ENCODE measurements at regions of chr5 and their contacts with region 1.

Region 1: GRCh38 chr5:33299621-33300208 is 141.1 kb upstream of the TARS1 start:
- DNase-seq: peak; percentile 21
- H3K4me3 Mint-ChIP-seq: no peak overlapping the region
- H3K27ac Mint-ChIP-seq: no peak overlapping the region
- H3K4me1 Mint-ChIP-seq: no peaks in the 10 kb centered on the region
- H3K27me3 Mint-ChIP-seq: no peaks in the 10 kb centered on the region
- CTCF ChIP-seq: no peak

Region 2: DNA sequence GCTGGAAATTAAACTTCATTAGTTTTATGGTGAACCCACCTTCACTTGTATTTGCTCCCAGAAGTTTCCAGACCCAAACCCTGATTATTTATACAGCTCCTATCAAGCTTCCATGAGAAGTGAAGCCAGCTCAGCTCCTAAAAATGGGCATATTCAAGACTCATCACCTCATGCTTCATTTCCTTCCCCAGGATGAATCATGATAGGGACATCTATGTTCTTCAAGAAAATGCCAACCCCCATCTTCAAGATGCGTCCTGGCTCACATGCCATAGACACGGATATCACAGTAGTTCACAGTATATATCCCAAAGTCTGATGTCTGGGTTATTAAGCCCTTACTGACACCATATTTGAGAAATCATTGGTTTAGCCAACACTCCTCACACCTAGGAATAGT is 371.0 kb before region 1 on chr5:
- CTCF ChIA-PET with region 1: no interaction called
- intact Hi-C with region 1: loop called (anchors 10 kb)
- DNase-seq: no peak
- H3K4me3 Mint-ChIP-seq: no peak overlapping the region
- H3K27ac Mint-ChIP-seq: no peak overlapping the region
- H3K4me1 Mint-ChIP-seq: no peaks in the 10 kb centered on the region
- H3K27me3 Mint-ChIP-seq: no peaks in the 10 kb centered on the region
- CTCF ChIP-seq: no peak

Region 3: GRCh38 chr5:33254581-33254980 is 45.1 kb before region 1 on chr5:
- CTCF ChIA-PET with region 1: no interaction called
- intact Hi-C with region 1: no loop called
- DNase-seq: no peak
- H3K4me3 Mint-ChIP-seq: no peak overlapping the region
- H3K27ac Mint-ChIP-seq: no peak overlapping the region
- H3K4me1 Mint-ChIP-seq: no peaks in the 10 kb centered on the region
- H3K27me3 Mint-ChIP-seq: no peaks in the 10 kb centered on the region
- CTCF ChIP-seq: no peak

Measured in Calu3 (cell line).